ENCODE measurements at regions of chr3 and their contacts with region 1.

Region 1: GRCh38 chr3:60742606-60743145 is 508.6 kb downstream of the FHIT start:
- DNase-seq: peak; percentile 38 to 45
- H3K4me3 ChIP-seq: no peak overlapping the region
- H3K4me3 Mint-ChIP-seq: no peak overlapping the region
- H3K27ac Mint-ChIP-seq: no peak overlapping the region
- H3K4me1 ChIP-seq: peaks cover 28% of the 10 kb centered on the region
- H3K4me1 Mint-ChIP-seq: peaks cover 18% of the 10 kb centered on the region
- H3K27me3 ChIP-seq: no peaks in the 10 kb centered on the region
- H3K27me3 Mint-ChIP-seq: no peaks in the 10 kb centered on the region
- CTCF ChIP-seq: peak; percentile 29 to 33

Region 2: GRCh38 chr3:60633644-60634043 is 109.0 kb before region 1 on chr3:
- CTCF ChIA-PET with region 1: no interaction called
- POLR2A ChIA-PET with region 1: no interaction called
- intact Hi-C with region 1: loop called (anchors 5 kb)
- DNase-seq: no peak
- H3K4me3 ChIP-seq: no peak overlapping the region
- H3K4me3 Mint-ChIP-seq: no peak overlapping the region
- H3K27ac Mint-ChIP-seq: no peak overlapping the region
- H3K4me1 ChIP-seq: peaks cover 66% of the 10 kb centered on the region
- H3K4me1 Mint-ChIP-seq: peaks cover 42% of the 10 kb centered on the region
- H3K27me3 ChIP-seq: no peaks in the 10 kb centered on the region
- H3K27me3 Mint-ChIP-seq: no peaks in the 10 kb centered on the region
- CTCF ChIP-seq: no peak

Region 3: GRCh38 chr3:60669636-60670035 is 73.0 kb before region 1 on chr3:
- CTCF ChIA-PET with region 1: no interaction called
- POLR2A ChIA-PET with region 1: no interaction called
- intact Hi-C with region 1: no loop called
- DNase-seq: no peak
- H3K4me3 ChIP-seq: no peak overlapping the region
- H3K4me3 Mint-ChIP-seq: no peak overlapping the region
- H3K27ac Mint-ChIP-seq: no peak overlapping the region
- H3K4me1 ChIP-seq: no peaks in the 10 kb centered on the region
- H3K4me1 Mint-ChIP-seq: peaks cover 12% of the 10 kb centered on the region
- H3K27me3 ChIP-seq: no peaks in the 10 kb centered on the region
- H3K27me3 Mint-ChIP-seq: no peaks in the 10 kb centered on the region
- CTCF ChIP-seq: no peak

Region 4: GRCh38 chr3:60696428-60697125 is 46.1 kb before region 1 on chr3:
- CTCF ChIA-PET with region 1: no interaction called
- POLR2A ChIA-PET with region 1: no interaction called
- intact Hi-C with region 1: loop called (anchors 2 kb)
- DNase-seq: no peak
- H3K4me3 ChIP-seq: no peak overlapping the region
- H3K4me3 Mint-ChIP-seq: no peak overlapping the region
- H3K27ac Mint-ChIP-seq: no peak overlapping the region
- H3K4me1 ChIP-seq: no peaks in the 10 kb centered on the region
- H3K4me1 Mint-ChIP-seq: peaks cover 6% of the 10 kb centered on the region
- H3K27me3 ChIP-seq: no peaks in the 10 kb centered on the region
- H3K27me3 Mint-ChIP-seq: no peaks in the 10 kb centered on the region
- CTCF ChIP-seq: no peak

Region 5: GRCh38 chr3:60841363-60841762 is 98.7 kb after region 1 on chr3:
- CTCF ChIA-PET with region 1: no interaction called
- POLR2A ChIA-PET with region 1: no interaction called
- intact Hi-C with region 1: loop called (anchors 1 kb)
- DNase-seq: peak; percentile 66 to 69
- H3K4me3 ChIP-seq: no peak overlapping the region
- H3K4me3 Mint-ChIP-seq: no peak overlapping the region
- H3K27ac Mint-ChIP-seq: no peak overlapping the region
- H3K4me1 ChIP-seq: peaks cover 5% of the 10 kb centered on the region; the same call in 1 of the 2 replicates
- H3K4me1 Mint-ChIP-seq: no peaks in the 10 kb centered on the region
- H3K27me3 ChIP-seq: no peaks in the 10 kb centered on the region
- H3K27me3 Mint-ChIP-seq: no peaks in the 10 kb centered on the region
- CTCF ChIP-seq: no peak

Region 6: DNA sequence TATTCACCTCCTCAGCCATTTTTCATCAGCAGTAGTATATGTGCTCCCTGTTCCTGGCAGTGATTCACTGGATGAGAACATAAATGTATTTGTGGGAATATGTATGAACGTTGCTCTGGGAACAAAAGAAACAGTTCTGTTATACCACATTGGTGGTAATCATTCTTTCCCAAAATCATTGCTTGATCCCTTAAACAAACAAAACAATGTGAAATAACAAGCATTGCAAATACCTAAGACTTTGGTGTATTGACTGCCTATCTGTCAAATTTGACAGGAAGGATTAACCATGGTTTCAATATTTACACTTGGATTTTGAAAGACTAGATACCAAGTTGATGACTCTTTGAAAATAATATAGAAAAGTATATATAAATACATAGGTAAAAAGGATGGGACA is 224.5 kb after region 1 on chr3:
- CTCF ChIA-PET with region 1: no interaction called
- POLR2A ChIA-PET with region 1: no interaction called
- intact Hi-C with region 1: loop called (anchors 1 kb)
- DNase-seq: peak in 1 of 2 experiments; percentile 28
- H3K4me3 ChIP-seq: no peak overlapping the region
- H3K4me3 Mint-ChIP-seq: no peak overlapping the region
- H3K27ac Mint-ChIP-seq: no peak overlapping the region
- H3K4me1 ChIP-seq: 0 out of 2 replicates have a peak, but pooled peaks cover 3% of the 10 kb centered on the region
- H3K4me1 Mint-ChIP-seq: no peaks in the 10 kb centered on the region
- H3K27me3 ChIP-seq: no peaks in the 10 kb centered on the region
- H3K27me3 Mint-ChIP-seq: peaks cover 4% of the 10 kb centered on the region
- CTCF ChIP-seq: no peak